ENCODE measurements at regions of chr1 and their contacts with region 1.

Region 1: DNA sequence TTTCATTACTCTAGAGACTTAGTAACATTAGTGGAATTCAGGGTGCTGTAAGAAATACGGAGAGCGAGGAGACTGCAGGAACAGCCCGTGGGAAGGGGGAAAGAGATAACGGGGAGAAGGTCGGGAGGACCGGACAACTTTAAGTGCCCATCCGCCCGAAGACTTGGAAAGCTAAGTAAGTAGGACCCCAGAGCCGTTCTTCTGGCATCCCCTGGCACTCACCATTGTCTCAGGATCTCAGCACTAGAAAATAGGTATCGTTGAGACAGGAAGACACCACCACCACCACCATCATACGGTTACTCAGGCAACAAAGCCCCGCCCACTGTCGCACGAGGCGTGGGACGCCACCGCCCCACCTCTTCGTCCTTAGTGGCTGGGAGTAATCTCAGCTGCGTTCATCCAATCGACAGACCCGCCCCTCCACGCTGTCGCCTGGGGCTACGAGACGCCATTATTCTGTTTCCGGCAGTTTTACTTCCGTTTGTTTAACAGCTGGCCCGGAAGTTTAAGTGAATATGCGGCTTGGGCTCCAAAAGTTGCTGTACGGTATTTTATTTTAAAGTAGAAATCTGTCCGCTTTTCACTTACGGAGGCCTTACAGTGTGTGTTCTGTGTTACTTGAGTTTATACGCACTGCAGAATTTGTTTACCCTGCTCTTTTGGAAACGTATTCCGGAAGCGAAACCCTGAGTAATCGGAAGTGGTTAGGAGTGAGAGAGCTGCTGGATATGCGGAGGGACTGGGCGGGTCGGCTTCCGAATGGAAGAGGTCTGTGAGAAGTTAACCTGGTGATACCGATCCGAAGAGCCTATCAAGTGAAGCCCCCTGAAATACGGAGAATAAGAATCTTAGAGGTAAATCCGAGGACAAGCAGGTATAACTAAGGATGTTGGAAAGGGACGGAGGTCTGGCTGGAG is at the starts of genes BLZF1 and NME7:
- DNase-seq: peak; percentile 98
- total RNA-seq, gene BLZF1: 23.1 TPM
- total RNA-seq, gene NME7: 9.8 TPM

Region 2: DNA sequence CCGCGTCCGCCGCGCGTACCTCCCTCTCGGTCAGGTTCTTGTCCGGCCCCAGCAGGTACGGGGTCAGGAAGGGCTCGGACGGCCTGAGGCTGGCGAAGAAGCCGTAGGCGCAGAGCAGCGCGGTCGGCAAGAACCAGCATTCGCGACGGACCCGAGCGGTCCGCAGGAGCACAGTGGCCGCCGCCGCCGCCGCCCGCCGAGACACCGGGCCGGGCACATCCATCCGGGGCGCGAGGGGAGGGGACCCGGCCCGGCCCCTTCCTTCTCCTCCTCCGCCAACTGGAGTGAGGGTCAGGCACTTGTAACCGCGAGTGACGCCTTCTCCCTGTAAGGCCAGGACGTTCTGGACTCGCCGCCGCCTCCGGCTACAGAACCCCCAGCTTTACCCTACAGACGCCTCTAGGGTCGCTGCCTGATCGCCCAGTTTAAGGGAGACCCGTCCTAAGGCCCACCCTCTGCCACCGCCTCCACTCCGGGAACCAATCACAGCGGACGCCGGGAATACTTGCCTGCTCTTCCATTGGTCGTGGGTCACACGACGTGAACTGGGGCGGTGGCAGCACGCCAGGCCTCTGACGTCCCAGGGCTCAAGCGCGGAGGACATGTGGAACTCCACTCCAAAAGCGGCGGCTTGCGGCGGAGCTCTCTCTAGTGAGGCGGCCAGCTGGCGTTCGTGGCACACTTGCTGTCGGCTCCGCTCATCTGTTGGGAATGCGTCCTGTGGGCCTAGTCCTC is 118.0 kb after region 1 on chr1 and contains the start of gene SLC19A2:
- intact Hi-C with region 1: loop called (anchors 10 kb)
- DNase-seq: peak; percentile 100
- total RNA-seq, gene SLC19A2: 5.1 TPM

Region 3: GRCh38 chr1:169711469-169712281 is 343.9 kb after region 1 on chr1 and contains the start of gene SELL:
- intact Hi-C with region 1: no loop called
- DNase-seq: peak; percentile 77
- total RNA-seq, gene SELL: 4.0 TPM

Region 4: GRCh38 chr1:169925505-169926482 is 558.0 kb after region 1 on chr1:
- intact Hi-C with region 1: no loop called
- DNase-seq: no peak

Measured in cardiac septum (tissue), 1 donor.